PC-9 (cell line): ENCODE measurements at regions of chr6 and their contacts with region 1.

Region 1: GRCh38 chr6:111642463-111643158 is 36.9 kb upstream of the TRAF3IP2 start:
- DNase-seq: peak; percentile 46 to 50
- H3K4me3 ChIP-seq: no peak overlapping the region
- H3K27ac ChIP-seq: no peak overlapping the region
- H3K4me1 ChIP-seq: no peaks in the 10 kb centered on the region
- H3K27me3 ChIP-seq: no peaks in the 10 kb centered on the region
- CTCF ChIP-seq: peak; percentile 71

Region 2: DNA sequence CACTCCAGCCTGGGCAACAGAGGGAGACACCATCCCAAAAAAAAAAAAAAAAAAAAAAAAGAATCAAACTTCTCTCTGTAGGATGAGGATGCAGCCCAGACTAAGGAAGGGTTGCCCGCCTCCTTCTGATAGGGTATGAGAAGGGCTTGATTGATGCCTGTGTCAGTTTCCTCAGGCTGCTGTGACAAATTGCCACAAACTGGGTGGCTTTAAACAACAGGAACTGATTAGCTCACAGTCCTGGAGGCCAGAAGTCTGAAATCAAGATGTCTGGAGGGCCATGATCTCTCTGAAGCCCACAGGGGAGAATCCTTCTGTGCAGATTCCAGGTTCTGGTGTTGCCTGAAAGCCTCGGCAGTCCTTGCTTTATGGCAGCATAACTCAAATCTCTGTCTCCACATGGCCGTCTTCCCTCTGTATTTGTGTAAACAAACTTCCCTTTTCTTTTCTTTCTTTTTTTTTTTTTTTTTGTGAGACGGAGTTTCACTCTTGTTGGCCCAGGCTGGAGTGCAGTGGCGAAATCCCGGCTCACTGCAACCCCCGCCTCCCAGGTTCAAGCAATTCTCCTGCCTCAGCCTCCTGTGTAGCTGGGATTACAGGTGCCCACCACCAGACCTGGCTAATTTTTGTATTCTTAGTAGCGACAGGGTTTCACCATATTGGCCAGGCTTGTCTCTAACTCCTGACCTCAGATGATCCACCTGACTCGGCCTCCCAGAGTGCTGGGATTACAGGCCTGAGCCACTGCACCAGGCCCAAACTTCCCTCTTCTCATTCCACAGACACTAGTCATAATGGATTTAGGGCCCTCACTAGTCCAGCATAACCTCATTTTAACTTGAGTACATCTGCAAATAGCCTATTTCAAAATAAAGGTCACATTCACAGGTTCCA is 816.1 kb before region 1 on chr6:
- CTCF ChIA-PET with region 1: no interaction called
- POLR2A ChIA-PET with region 1: interaction called, 14 read pairs
- intact Hi-C with region 1: no loop called
- DNase-seq: peak; percentile 26 to 95
- H3K4me3 ChIP-seq: no peak overlapping the region; the same call in 1 of the 2 replicates
- H3K27ac ChIP-seq: peak overlapping the region; percentile 80
- H3K4me1 ChIP-seq: peaks cover 37% of the 10 kb centered on the region
- H3K27me3 ChIP-seq: no peaks in the 10 kb centered on the region
- CTCF ChIP-seq: no peak

Region 3: GRCh38 chr6:111657146-111657545 is 14.5 kb after region 1 on chr6:
- CTCF ChIA-PET with region 1: no interaction called
- POLR2A ChIA-PET with region 1: no interaction called
- intact Hi-C with region 1: no loop called
- DNase-seq: peak in 1 of 2 experiments; percentile 73
- H3K4me3 ChIP-seq: no peak overlapping the region
- H3K27ac ChIP-seq: no peak overlapping the region
- H3K4me1 ChIP-seq: peaks cover 10% of the 10 kb centered on the region; the same call in 1 of the 2 replicates
- H3K27me3 ChIP-seq: no peaks in the 10 kb centered on the region
- CTCF ChIP-seq: no peak